ENCODE measurements at regions of chr14 and their contacts with region 1.

Region 1: DNA sequence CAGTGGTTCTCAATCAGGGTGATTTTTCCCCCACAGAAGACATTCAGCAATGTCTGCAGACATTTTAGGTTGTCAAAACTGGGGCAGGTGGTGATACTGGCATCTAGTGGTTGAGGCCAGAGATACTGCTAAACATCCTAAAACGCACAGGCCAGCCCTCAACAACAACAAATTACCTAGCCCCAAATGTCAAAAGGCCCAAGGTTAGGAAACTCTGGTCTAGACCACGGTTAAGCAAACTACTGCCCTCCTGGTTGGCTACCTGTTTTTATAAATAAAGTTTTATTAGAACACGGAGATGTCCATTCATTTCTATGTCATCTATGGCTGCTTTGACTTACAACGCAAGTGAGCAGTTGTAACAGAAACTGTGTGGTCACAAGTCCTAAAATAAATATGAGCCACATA is 186.7 kb downstream of the EFCAB11 start:
- DNase-seq: peak; percentile 48
- H3K4me3 ChIP-seq: no peak overlapping the region
- H3K27ac ChIP-seq: no peak overlapping the region
- H3K4me1 ChIP-seq: no peaks in the 10 kb centered on the region
- H3K27me3 ChIP-seq: no peaks in the 10 kb centered on the region
- CTCF ChIP-seq: peak; percentile 38

Region 2: DNA sequence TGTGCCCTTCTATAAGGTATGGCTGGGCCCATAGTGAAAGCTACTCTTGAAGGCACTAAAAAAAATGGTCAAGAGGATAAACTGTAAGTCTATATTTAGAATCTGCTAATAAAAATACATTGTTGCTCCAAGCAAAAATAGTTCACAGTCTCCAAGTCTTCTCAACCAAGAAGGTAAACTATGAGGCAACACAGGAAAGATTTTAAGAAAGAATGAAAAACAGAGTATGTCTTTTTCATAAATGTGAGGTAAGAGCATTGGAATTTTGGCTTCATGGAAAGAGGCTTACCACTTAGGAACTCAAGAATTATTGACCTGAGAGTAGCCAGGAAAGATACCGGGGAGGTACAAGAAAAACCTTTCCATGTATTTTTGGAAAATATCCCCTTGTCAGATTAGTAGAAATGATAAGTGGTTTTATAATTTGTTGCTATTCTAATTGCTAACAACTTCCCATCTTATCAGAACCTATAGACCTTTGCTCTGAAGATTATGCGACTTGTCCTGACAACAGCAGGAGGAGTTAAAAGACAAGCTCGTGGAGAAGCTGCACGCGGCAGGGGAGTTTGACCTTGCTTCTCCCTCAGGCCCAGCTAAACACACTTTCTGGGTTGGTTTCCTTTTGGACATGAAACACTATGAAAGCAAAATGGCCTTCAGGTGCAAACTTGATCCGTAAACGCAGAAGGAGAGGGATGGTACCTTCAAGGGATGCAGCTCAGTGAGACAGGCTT is 588.9 kb before region 1 on chr14:
- intact Hi-C with region 1: loop called (anchors 10 kb)
- DNase-seq: no peak
- H3K4me3 ChIP-seq: no peak overlapping the region
- H3K27ac ChIP-seq: no peak overlapping the region
- H3K4me1 ChIP-seq: no peaks in the 10 kb centered on the region
- H3K27me3 ChIP-seq: no peaks in the 10 kb centered on the region
- CTCF ChIP-seq: no peak